ENCODE measurements at regions of chr3 and their contacts with region 1.

Region 1: DNA sequence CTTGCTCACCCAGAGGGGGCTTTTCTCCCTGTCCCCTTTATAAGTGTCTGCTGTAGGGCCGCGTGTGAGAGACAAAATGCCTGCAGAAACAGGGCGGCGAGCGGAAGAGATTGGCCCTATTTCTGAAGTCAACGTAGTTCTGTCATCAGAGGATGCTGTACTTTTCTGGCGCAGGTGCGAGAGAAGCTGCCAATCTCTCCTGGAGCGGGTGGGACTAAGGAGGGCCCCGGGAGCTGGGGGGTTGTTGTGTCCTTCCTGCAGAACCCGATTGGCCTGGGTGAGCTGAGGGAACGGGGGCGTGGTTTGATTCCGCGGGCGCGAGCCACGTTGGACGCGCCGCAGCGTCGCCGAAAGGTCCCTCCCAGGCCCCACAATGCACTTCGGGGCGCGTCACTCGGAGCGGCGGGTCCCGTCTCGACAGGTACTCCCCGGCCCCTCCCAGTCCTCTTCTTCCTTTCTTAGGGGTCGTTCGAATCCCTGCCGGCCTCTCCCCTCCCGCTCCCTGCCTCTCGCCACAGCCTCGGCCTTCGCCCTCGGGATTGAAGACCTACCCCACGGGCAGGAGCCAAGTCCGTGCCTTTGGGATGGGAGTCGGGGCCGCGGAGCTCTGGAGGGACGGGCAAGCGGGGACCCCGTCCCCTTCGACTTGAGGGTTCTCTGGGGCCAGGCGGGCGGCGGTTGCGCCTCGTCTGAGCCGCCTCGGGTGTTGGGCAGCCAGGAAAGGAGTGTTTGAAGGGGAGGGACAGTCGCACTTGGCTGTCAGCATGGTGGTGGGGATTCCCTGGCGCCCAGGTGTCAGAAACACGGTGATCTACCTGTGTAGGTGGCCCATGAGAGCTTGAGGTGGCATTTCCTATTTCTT is at the start of gene SEC22A:
- DNase-seq: peak; percentile 96
- H3K4me3 ChIP-seq: peak within 1 kb of the TSS; percentile 85 to 97 (median 92)
- H3K27ac ChIP-seq: peak within 1 kb of the TSS; percentile 83 to 86 (median 86)
- H3K4me1 ChIP-seq: peaks cover 0 to 22% (median 9%) of the 10 kb centered on the region in 4 donors
- H3K27me3 ChIP-seq: no peaks in the 10 kb centered on the region
- CTCF ChIP-seq: no peak
- EP300 ChIP-seq: peak in 2 of 4 donors; percentile 5 to 18
- POLR2A ChIP-seq: peak; percentile 64 to 74
- total RNA-seq, gene SEC22A: 17.8 to 47.2 (median 31.4) TPM

Region 2: DNA sequence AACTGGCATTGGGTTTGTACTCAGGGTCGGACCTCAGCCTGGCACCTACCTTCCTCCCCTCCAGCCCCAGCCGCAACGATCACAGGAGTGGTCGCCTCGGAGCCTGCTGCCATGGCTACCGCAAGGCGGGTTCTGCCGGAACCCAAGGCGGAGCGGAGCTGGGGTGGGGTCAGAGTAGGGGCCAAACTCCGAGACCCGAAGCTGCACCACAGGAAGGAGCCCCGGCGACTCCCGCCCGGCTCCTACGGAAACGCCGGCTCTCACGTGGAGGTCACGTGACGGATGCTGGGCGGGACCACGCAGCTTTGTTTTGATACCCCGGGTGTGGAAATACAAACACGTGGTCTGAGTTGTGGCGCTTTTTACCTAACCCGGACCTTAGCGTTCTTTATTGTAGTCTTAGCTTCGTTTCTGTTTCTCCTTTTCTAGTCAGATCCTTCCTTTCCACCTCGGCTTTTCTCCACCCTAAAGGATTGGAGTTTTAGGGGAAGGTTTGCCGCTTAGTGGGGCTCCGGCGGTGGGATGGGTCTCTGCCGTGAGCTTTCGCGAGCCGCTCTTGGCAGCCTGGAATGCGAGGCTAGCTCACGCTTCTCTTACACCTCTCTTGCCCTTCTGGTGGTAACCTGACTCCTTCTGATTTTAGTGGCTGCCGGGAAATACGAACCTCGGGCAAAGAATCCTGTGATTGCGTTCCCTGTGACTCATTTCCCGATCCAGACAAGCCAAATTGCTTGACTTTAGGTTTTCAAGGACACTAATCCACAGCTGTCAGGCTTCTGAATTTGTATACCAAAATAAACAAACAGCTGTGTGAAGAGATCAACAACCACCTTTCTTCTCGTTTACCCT is 408.0 kb before region 1 on chr3 and contains the start of gene HSPBAP1:
- intact Hi-C with region 1: loop called (anchors 10 kb)
- DNase-seq: peak; percentile 96
- H3K4me3 ChIP-seq: peak within 1 kb of the TSS; percentile 70 to 94 (median 90)
- H3K27ac ChIP-seq: peak within 1 kb of the TSS; percentile 94 to 98 (median 98)
- H3K4me1 ChIP-seq: peaks cover 0 to 30% (median 24%) of the 10 kb centered on the region in 4 donors
- H3K27me3 ChIP-seq: no peaks in the 10 kb centered on the region
- CTCF ChIP-seq: no peak
- EP300 ChIP-seq: peak in 2 of 4 donors; percentile 18 to 43
- POLR2A ChIP-seq: peak; percentile 43 to 46
- total RNA-seq, gene HSPBAP1: 11.1 to 13.8 (median 12.6) TPM

Region 3: GRCh38 chr3:122942937-122943827 is 258.6 kb before region 1 on chr3:
- intact Hi-C with region 1: loop called (anchors 5 kb)
- DNase-seq: no peak
- H3K4me3 ChIP-seq: no peak overlapping the region
- H3K27ac ChIP-seq: no peak overlapping the region
- H3K4me1 ChIP-seq: peaks cover 0 to 14% (median 4%) of the 10 kb centered on the region in 4 donors
- H3K27me3 ChIP-seq: no peaks in the 10 kb centered on the region
- CTCF ChIP-seq: peak; percentile 58 to 90 (median 80)
- EP300 ChIP-seq: no peak
- POLR2A ChIP-seq: no peak

Region 4: DNA sequence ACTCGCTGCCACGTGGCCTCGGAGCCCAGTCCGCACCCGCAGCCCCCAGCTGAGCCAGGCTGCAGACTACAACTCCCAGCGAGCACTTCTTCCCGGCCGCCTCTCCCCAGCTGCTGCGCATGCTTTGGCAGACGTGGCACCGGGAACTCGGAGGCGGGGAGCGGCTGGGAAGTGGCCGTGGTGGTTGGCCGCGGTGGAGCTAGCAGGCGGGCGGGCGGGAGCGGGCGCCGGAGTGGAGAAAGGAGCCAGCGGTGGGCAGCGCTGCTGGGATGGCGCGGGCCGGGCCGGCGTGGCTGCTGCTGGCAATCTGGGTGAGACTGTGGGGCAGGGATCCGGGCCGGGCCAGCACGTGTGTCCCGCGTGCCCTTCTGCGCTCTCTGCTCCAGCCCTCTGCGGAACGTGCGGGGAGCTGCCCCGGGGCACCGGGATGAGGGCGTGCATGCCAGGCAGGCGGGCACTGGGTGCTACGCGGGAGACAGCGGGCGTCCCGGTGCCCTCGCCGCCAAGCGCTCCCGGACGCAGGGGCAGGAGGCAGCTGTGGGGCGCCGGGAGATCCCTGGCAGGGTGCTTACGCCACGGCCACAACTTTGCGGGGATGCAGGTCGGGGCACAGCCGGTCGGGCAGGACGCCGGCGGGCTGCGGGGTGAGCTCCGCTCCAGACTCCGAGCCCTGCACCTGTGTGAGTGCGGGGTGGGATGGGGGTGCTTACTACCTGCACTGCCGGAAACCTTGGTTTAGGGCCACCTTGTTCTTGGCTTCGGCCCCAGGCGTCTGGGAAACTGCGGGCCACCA is 134.7 kb before region 1 on chr3 and contains the start of gene PDIA5:
- intact Hi-C with region 1: loop called (anchors 5 kb)
- DNase-seq: peak; percentile 95
- H3K4me3 ChIP-seq: peak within 1 kb of the TSS; percentile 66 to 91 (median 86)
- H3K27ac ChIP-seq: peak within 1 kb of the TSS; percentile 73 to 88 (median 82)
- H3K4me1 ChIP-seq: peaks cover 0 to 47% (median 33%) of the 10 kb centered on the region in 4 donors
- H3K27me3 ChIP-seq: no peaks in the 10 kb centered on the region
- CTCF ChIP-seq: no peak
- EP300 ChIP-seq: no peak
- POLR2A ChIP-seq: peak; percentile 43 to 66
- total RNA-seq, gene PDIA5: 13.8 to 15.1 (median 14.2) TPM

Region 5: GRCh38 chr3:123096731-123097130 is 105.1 kb before region 1 on chr3:
- intact Hi-C with region 1: loop called (anchors 5 kb)
- DNase-seq: peak; percentile 94
- H3K4me3 ChIP-seq: no peak overlapping the region
- H3K27ac ChIP-seq: peak overlapping the region; percentile 48 to 80 (median 74)
- H3K4me1 ChIP-seq: peaks cover 0 to 53% (median 44%) of the 10 kb centered on the region in 4 donors
- H3K27me3 ChIP-seq: no peaks in the 10 kb centered on the region
- CTCF ChIP-seq: no peak
- EP300 ChIP-seq: no peak
- POLR2A ChIP-seq: no peak